ENCODE measurements at regions of chr5 and their contacts with region 1.

Region 1: GRCh38 chr5:54443270-54443669 is 12.2 kb upstream of the HSPB3 start:
- DNase-seq: no peak
- H3K4me3 Mint-ChIP-seq: no peak overlapping the region
- H3K27ac Mint-ChIP-seq: no peak overlapping the region
- H3K4me1 Mint-ChIP-seq: peaks cover 7% of the 10 kb centered on the region
- H3K27me3 Mint-ChIP-seq: no peaks in the 10 kb centered on the region

Region 2: GRCh38 chr5:54492178-54492577 is 48.9 kb after region 1 on chr5:
- CTCF ChIA-PET with region 1: interaction called, 20 read pairs
- POLR2A ChIA-PET with region 1: no interaction called
- intact Hi-C with region 1: loop called (anchors 1 kb)
- DNase-seq: no peak
- H3K4me3 Mint-ChIP-seq: no peak overlapping the region
- H3K27ac Mint-ChIP-seq: no peak overlapping the region
- H3K4me1 Mint-ChIP-seq: no peaks in the 10 kb centered on the region
- H3K27me3 Mint-ChIP-seq: peaks cover 4% of the 10 kb centered on the region

Region 3: DNA sequence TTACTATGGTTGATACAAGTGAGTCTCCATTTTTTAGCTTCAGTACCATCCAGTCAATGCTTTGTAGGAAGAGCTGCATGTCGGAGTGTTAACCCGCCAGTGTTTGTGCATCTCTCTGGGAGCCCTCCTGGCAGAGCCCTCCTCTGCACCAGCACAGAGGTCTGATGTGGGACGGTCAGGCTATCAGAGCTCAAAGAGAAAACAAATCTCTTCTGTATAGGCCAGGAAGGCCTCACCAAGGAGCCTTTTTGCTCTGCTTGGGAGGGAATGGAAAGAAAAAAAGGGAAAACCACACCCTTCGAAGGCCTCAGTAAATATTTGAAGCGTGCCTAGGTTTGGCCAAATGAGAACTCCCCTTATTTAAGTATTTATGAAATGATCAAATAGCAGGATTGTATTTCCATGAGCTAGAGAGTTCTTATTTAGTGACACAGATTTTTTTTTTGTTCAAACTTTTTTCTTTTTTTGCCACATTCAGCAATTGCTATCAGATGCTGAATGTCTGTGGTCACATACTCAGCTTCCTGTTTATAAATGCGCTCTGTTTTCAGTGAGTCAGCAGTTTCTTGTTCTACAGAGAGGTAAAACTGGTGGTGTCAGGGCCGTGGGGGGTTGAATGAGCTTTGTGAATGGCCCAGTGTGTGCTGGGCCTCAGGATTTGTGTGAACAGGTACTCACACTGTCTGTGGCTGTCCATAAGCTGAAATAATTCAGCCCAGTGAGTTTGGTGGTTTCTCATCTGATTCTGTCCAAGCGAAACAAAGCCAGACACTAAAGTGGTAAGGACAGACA is 300.9 kb after region 1 on chr5:
- CTCF ChIA-PET with region 1: no interaction called
- POLR2A ChIA-PET with region 1: no interaction called
- intact Hi-C with region 1: no loop called
- DNase-seq: peak; percentile 75
- H3K4me3 Mint-ChIP-seq: peak overlapping the region; percentile 30
- H3K27ac Mint-ChIP-seq: peak overlapping the region; percentile 83
- H3K4me1 Mint-ChIP-seq: peaks cover 23% of the 10 kb centered on the region
- H3K27me3 Mint-ChIP-seq: no peaks in the 10 kb centered on the region